Naive thymus-derived CD4-positive, alpha-beta T cell (primary cell): ENCODE measurements at regions of chr12 and their contacts with region 1.

Region 1: DNA sequence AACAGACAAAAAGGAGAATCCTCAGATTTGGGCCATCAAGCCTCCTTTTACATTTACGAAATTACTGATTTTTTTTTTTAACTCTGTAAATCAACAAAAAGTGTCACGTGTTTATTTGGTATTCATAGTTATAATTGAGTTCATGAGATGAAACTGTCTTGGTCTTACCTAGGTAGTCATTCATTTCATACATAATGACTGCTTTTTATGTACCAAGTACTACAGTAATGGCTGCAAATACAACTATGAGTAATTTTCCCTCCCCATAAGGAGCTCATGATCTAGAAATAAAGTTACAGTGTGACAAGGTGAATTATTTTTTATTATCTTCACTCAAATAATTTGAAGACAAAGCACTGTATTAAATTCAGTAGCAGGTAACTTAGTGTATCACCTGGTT is 6.4 kb upstream of the TBK1 start:
- DNase-seq: no peak
- ATAC-seq: no peak
- H3K4me3 ChIP-seq: no peak overlapping the region
- H3K4me3 Mint-ChIP-seq: no peak overlapping the region
- H3K27ac ChIP-seq: no peak overlapping the region
- H3K27ac Mint-ChIP-seq: peak overlapping the region in 6 of 9 donors; percentile 14 to 79 (median 54)
- H3K4me1 ChIP-seq: peaks cover under 1 to 12% of the 10 kb centered on the region in 2 donors
- H3K4me1 Mint-ChIP-seq: peaks cover 12 to 38% (median 31%) of the 10 kb centered on the region in 7 donors
- H3K27me3 ChIP-seq: no peaks in the 10 kb centered on the region
- H3K27me3 Mint-ChIP-seq: no peaks in the 10 kb centered on the region

Region 2: GRCh38 chr12:64466178-64466577 is 20.7 kb after region 1 on chr12:
- CTCF ChIA-PET with region 1: no interaction called
- POLR2A ChIA-PET with region 1: no interaction called
- intact Hi-C with region 1: loop called in 1 of 2 experiments (anchors 2 kb)
- DNase-seq: no peak
- ATAC-seq: no peak
- H3K4me3 ChIP-seq: no peak overlapping the region
- H3K4me3 Mint-ChIP-seq: no peak overlapping the region
- H3K27ac ChIP-seq: no peak overlapping the region
- H3K27ac Mint-ChIP-seq: no peak overlapping the region
- H3K4me1 ChIP-seq: no peaks in the 10 kb centered on the region
- H3K4me1 Mint-ChIP-seq: peaks cover 0 to 6% (median 0%) of the 10 kb centered on the region in 7 donors
- H3K27me3 ChIP-seq: no peaks in the 10 kb centered on the region
- H3K27me3 Mint-ChIP-seq: no peaks in the 10 kb centered on the region

Region 3: DNA sequence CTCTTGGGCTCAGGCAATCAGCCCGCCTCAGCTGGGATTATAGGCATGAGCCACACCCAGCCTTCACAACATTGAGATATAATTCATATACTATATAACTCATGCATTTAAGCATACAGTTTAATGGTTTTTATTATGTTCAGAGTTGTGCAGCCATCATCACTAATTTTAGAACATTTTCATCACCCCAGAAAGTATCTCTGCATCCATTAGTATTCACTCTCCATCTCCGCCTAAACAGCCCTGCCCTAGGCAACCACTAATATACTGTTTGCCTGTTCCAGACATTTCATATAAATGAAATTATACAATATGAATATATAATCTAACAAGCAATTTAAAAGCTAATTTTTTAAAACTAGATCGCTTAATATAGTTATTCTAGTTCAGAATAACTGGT is 41.2 kb after region 1 on chr12:
- CTCF ChIA-PET with region 1: no interaction called
- POLR2A ChIA-PET with region 1: no interaction called
- intact Hi-C with region 1: no loop called
- DNase-seq: no peak
- ATAC-seq: no peak
- H3K4me3 ChIP-seq: no peak overlapping the region
- H3K4me3 Mint-ChIP-seq: no peak overlapping the region
- H3K27ac ChIP-seq: no peak overlapping the region
- H3K27ac Mint-ChIP-seq: no peak overlapping the region
- H3K4me1 ChIP-seq: no peaks in the 10 kb centered on the region
- H3K4me1 Mint-ChIP-seq: peaks cover 0 to 9% (median 0%) of the 10 kb centered on the region in 7 donors
- H3K27me3 ChIP-seq: no peaks in the 10 kb centered on the region
- H3K27me3 Mint-ChIP-seq: no peaks in the 10 kb centered on the region

Region 4: GRCh38 chr12:64587447-64587846 is 142.0 kb after region 1 on chr12:
- CTCF ChIA-PET with region 1: no interaction called
- POLR2A ChIA-PET with region 1: no interaction called
- intact Hi-C with region 1: no loop called
- DNase-seq: no peak
- ATAC-seq: no peak
- H3K4me3 ChIP-seq: no peak overlapping the region
- H3K4me3 Mint-ChIP-seq: no peak overlapping the region
- H3K27ac ChIP-seq: no peak overlapping the region
- H3K27ac Mint-ChIP-seq: peak overlapping the region in 1 of 9 donors; percentile 4
- H3K4me1 ChIP-seq: peaks cover 6 to 23% of the 10 kb centered on the region in 2 donors
- H3K4me1 Mint-ChIP-seq: peaks cover 18 to 40% (median 27%) of the 10 kb centered on the region in 7 donors
- H3K27me3 ChIP-seq: no peaks in the 10 kb centered on the region
- H3K27me3 Mint-ChIP-seq: peaks cover 0 to 5% (median 0%) of the 10 kb centered on the region in 5 donors